ENCODE measurements at regions of chr5 and their contacts with region 1.

Region 1: DNA sequence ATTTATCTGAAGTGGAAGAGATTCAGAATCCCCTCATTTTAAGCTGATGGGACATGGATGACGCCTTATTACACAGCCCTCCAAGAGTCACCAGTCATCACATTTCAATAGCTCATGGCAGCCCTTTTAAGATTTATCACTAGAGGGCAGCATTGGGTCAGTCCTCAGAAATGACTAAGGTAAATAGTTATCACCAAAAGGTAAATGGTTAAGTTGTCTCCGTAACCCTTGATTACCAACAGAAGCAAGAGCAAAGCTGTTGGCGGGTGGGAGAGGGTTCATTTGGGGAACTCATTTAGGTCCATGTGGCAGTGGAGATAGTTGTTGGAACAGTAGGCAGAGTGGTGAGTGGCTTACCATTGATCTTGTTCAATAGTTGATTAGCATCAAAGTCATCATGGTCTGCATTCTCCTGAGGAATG is 12.0 kb upstream of the C9 start:
- DNase-seq: peak; percentile 63
- ATAC-seq: peak; percentile 80
- H3K4me3 ChIP-seq: no peak overlapping the region
- H3K27ac ChIP-seq: no peak overlapping the region
- H3K4me1 ChIP-seq: no peaks in the 10 kb centered on the region
- H3K27me3 ChIP-seq: no peaks in the 10 kb centered on the region
- CTCF ChIP-seq: peak; percentile 86

Region 2: GRCh38 chr5:39167141-39167972 is 208.9 kb before region 1 on chr5:
- CTCF ChIA-PET with region 1: no interaction called
- POLR2A ChIA-PET with region 1: no interaction called
- in situ Hi-C with region 1: no loop called
- intact Hi-C with region 1: no loop called
- DNase-seq: no peak
- ATAC-seq: no peak; the same call in 1 of the 2 replicates
- H3K4me3 ChIP-seq: no peak overlapping the region
- H3K27ac ChIP-seq: no peak overlapping the region
- H3K4me1 ChIP-seq: no peaks in the 10 kb centered on the region
- H3K27me3 ChIP-seq: no peaks in the 10 kb centered on the region
- CTCF ChIP-seq: no peak

Region 3: DNA sequence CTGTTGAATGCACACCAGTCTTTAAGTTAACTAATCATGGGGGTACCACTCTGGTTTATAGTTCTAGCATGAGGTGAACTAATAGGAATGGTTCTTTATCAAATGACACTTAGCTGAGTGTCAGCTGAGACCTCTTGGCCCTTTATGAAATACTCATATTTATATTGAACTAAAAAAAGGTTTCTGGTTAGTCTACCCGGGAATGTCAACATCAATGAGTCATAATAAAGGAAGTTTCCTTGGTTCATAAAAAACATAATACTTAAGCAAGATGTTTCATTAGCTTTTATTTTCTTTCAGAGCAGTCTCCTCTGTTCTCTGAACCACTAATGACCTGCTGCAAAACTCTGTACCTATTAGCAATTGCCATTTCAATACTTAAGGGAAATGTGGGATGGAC is 34.7 kb after region 1 on chr5:
- CTCF ChIA-PET with region 1: no interaction called
- POLR2A ChIA-PET with region 1: no interaction called
- in situ Hi-C with region 1: no loop called
- intact Hi-C with region 1: no loop called
- DNase-seq: no peak
- ATAC-seq: no peak
- H3K4me3 ChIP-seq: no peak overlapping the region
- H3K27ac ChIP-seq: no peak overlapping the region
- H3K4me1 ChIP-seq: no peaks in the 10 kb centered on the region
- H3K27me3 ChIP-seq: no peaks in the 10 kb centered on the region; the same call in none of the 2 replicates
- CTCF ChIP-seq: no peak

Region 4: DNA sequence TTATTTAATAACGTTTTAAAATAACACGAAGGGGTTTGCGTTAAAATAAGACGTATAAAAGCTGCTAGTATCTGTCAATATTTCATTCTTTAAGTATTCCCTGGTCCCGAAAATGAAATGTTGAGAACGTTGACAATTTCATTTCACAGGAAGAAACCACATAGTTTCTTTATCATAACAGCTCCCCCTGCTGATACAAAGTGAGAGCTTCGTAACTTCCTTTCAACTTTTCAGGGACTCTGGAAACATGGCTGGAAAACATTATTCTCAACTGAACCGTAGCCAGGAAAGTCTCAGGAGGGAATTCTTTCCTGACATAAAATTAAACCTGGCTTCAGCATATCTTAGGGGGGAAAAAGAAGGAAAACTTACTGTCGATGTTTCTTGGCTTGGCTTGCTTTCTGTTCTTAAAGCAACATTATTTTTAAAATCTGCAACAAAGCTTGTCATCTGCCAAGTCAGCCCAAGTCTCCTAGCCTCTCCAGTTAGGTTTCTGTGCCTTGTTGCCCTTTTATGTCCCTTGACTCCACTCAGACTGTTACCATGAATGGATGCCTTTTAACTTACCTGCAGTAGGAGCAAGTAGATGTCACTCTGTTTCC is 171.3 kb after region 1 on chr5:
- CTCF ChIA-PET with region 1: interaction called, 29 read pairs
- POLR2A ChIA-PET with region 1: no interaction called
- in situ Hi-C with region 1: no loop called
- intact Hi-C with region 1: loop called (anchors 1 kb)
- DNase-seq: peak; percentile 42
- ATAC-seq: no peak; the same call in 1 of the 2 replicates
- H3K4me3 ChIP-seq: no peak overlapping the region
- H3K27ac ChIP-seq: no peak overlapping the region
- H3K4me1 ChIP-seq: no peaks in the 10 kb centered on the region
- H3K27me3 ChIP-seq: peaks cover 1% of the 10 kb centered on the region
- CTCF ChIP-seq: peak; percentile 72; the same call in 1 of the 2 replicates

Region 5: DNA sequence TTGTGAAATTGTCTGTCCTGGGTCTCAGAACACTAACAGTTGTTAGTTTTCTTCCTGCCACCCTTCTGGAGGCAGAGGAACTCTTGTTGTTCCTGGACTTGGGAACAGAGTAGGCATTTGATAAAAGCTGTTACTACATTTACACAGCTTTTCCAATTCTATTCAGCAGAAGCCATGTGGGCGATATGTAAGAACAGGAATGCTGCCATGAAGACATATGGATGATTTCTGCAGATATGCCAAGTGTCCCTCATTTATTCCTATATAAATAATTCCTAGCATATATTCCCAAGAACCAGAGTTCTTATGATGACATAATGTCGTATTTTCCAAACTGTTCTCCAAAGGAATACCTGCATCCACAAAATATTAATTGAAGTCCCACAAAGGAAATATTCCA is 184.4 kb after region 1 on chr5:
- CTCF ChIA-PET with region 1: no interaction called
- POLR2A ChIA-PET with region 1: no interaction called
- in situ Hi-C with region 1: no loop called
- intact Hi-C with region 1: loop called (anchors 5 kb)
- DNase-seq: no peak
- ATAC-seq: no peak
- H3K4me3 ChIP-seq: no peak overlapping the region
- H3K27ac ChIP-seq: no peak overlapping the region
- H3K4me1 ChIP-seq: no peaks in the 10 kb centered on the region
- H3K27me3 ChIP-seq: peaks cover 6% of the 10 kb centered on the region; the same call in 1 of the 2 replicates
- CTCF ChIP-seq: no peak